WTC11 (cell line): ENCODE measurements at regions of chr6 and their contacts with region 1.

Region 1: DNA sequence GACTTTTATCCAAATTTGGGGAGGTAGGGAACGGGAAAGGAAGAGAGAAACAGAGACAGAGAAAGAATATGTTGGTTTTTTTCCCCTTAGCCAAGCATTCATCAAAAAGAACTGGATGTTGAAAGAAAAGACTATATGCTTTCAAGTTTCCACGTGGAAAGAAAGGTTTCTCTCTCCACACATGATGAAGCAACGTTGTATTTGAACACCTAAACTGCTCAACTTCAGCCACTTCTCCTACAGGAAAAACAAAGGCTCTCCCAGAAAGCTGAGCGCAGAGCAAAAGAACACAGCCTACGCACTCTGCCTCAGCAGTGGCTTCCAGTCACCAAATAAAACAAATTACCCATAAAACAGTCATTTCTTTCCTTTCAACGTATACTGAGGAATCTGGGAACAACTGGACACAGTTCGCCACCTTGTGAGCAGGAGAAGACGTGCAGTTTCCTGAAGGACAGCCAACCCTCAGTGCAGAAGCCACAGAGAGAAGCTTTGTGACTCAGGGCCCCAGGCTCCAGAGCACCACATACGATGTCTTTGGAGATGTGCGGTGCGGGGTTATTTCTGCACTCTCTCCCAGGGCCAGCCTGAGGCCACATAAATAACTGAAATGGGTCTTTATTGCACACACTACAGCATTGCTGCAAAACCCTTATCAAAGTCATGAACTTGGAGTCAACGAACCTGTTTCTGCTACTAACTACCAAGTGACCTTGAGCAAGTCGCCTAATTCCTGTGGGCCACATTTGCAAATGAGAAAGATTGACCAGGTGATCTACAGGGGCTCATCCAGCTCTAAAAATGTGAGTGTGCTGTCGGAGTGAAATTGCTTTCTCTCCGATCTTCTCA is 10.1 kb downstream of the IL17F start:
- DNase-seq: peak; percentile 50
- ATAC-seq: peak; percentile 99
- H3K4me3 Mint-ChIP-seq: no peak overlapping the region
- H3K27ac Mint-ChIP-seq: no peak overlapping the region
- H3K4me1 Mint-ChIP-seq: peaks cover 24% of the 10 kb centered on the region
- H3K27me3 Mint-ChIP-seq: no peaks in the 10 kb centered on the region
- CTCF ChIP-seq: peak; percentile 45; the same call in 1 of the 2 replicates

Region 2: GRCh38 chr6:52049252-52050050 is 184.7 kb before region 1 on chr6:
- CTCF ChIA-PET with region 1: interaction called, 15 read pairs
- POLR2A ChIA-PET with region 1: no interaction called
- DNase-seq: no peak
- ATAC-seq: peak; percentile 50; the same call in 1 of the 2 replicates
- H3K4me3 Mint-ChIP-seq: no peak overlapping the region
- H3K27ac Mint-ChIP-seq: no peak overlapping the region
- H3K4me1 Mint-ChIP-seq: peaks cover 9% of the 10 kb centered on the region
- H3K27me3 Mint-ChIP-seq: no peaks in the 10 kb centered on the region
- CTCF ChIP-seq: peak; percentile 39

Region 3: GRCh38 chr6:52162940-52163908 is 71.0 kb before region 1 on chr6:
- CTCF ChIA-PET with region 1: interaction called, 14 read pairs
- POLR2A ChIA-PET with region 1: no interaction called
- DNase-seq: no peak
- ATAC-seq: peak; percentile 89
- H3K4me3 Mint-ChIP-seq: no peak overlapping the region
- H3K27ac Mint-ChIP-seq: no peak overlapping the region
- H3K4me1 Mint-ChIP-seq: peaks cover 2% of the 10 kb centered on the region; the same call in 1 of the 2 replicates
- H3K27me3 Mint-ChIP-seq: no peaks in the 10 kb centered on the region; the same call in 1 of the 2 replicates
- CTCF ChIP-seq: peak; percentile 30; the same call in 1 of the 2 replicates

Region 4: GRCh38 chr6:52213127-52213526 is 21.1 kb before region 1 on chr6:
- CTCF ChIA-PET with region 1: interaction called, 11 read pairs
- POLR2A ChIA-PET with region 1: no interaction called
- DNase-seq: no peak
- ATAC-seq: no peak
- H3K4me3 Mint-ChIP-seq: no peak overlapping the region
- H3K27ac Mint-ChIP-seq: no peak overlapping the region
- H3K4me1 Mint-ChIP-seq: peaks cover 14% of the 10 kb centered on the region
- H3K27me3 Mint-ChIP-seq: no peaks in the 10 kb centered on the region
- CTCF ChIP-seq: no peak